Astrocyte of the cerebellum (primary cell): ENCODE measurements at regions of chr5 and their contacts with region 1.

Region 1: GRCh38 chr5:180026320-180026719 is 45.2 kb downstream of the RNF130 start:
- DNase-seq: peak; percentile 60
- H3K4me3 ChIP-seq: no peak overlapping the region
- CTCF ChIP-seq: no peak

Region 2: GRCh38 chr5:179936976-179937681 is 89.2 kb before region 1 on chr5:
- in situ Hi-C with region 1: no loop called
- DNase-seq: no peak
- H3K4me3 ChIP-seq: no peak overlapping the region
- CTCF ChIP-seq: no peak

Region 3: GRCh38 chr5:179974946-179975712 is 51.2 kb before region 1 on chr5:
- in situ Hi-C with region 1: no loop called
- DNase-seq: no peak
- H3K4me3 ChIP-seq: no peak overlapping the region
- CTCF ChIP-seq: peak; percentile 53

Region 4: GRCh38 chr5:180069589-180070247 is 43.4 kb after region 1 on chr5:
- in situ Hi-C with region 1: loop called (anchors 5 kb)
- DNase-seq: no peak
- H3K4me3 ChIP-seq: peak overlapping the region; percentile 80
- CTCF ChIP-seq: no peak